GM12878 (cell line): ENCODE measurements at regions of chr4 and their contacts with region 1.

Region 1: DNA sequence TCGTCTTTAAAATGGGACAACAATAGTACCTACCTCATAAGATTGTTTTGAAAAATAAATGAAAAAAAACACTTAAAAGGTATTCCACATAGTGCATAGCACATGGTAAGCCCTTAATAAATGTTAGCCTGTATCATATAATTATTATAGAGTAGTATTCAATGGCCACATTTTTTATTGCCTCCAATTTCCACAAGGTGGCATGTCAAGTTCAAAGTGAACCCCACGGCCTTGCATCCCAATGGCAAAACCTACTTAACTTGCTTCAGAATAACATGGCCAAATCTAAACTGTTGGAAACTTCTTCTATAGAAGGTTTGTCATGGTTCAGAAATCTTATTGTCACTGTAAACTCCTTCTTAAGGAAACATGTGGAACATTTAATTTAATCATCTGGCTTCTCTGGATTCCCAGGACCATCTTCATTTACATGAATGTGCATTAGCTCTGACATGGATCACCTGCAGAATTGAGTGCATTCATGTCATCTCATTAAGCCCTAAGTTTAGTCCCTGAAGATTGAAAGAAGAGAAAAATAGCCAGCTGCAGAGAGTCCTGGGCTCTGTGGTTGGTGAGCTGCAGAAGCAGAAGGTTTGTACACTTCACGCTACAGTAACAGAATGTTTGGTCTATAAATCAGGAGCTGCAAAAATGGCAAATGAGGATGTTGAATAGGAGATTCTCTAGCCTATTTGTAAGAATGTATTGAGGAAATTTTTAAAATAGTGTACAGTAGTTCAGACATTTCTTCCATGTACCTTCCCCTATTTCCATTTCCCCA is 61.0 kb downstream of the ANXA3 start:
- DNase-seq: no peak
- ATAC-seq: peak; percentile 64
- H3K4me3 ChIP-seq: no peak overlapping the region
- H3K27ac ChIP-seq: no peak overlapping the region
- H3K4me1 ChIP-seq: peaks cover 35% of the 10 kb centered on the region
- H3K27me3 ChIP-seq: no peaks in the 10 kb centered on the region
- CTCF ChIP-seq: peak; percentile 55 to 80 (median 62)
- EP300 ChIP-seq: no peak
- POLR2A ChIP-seq: no peak
- RAD21 ChIP-seq: peak; percentile 89

Region 2: GRCh38 chr4:77959566-77960338 is 652.8 kb before region 1 on chr4:
- CTCF ChIA-PET with region 1: interaction called, 7 read pairs
- POLR2A ChIA-PET with region 1: no interaction called
- RAD21 ChIA-PET with region 1: interaction called, 10 read pairs
- SMC1A ChIA-PET with region 1: interaction called, 5 read pairs
- in situ Hi-C with region 1: no loop called
- intact Hi-C with region 1: no loop called
- DNase-seq: peak; percentile 12
- ATAC-seq: peak; percentile 52
- H3K4me3 ChIP-seq: no peak overlapping the region
- H3K27ac ChIP-seq: no peak overlapping the region
- H3K4me1 ChIP-seq: no peaks in the 10 kb centered on the region
- H3K27me3 ChIP-seq: no peaks in the 10 kb centered on the region
- CTCF ChIP-seq: peak; percentile 53 to 54 (median 53)
- EP300 ChIP-seq: no peak
- POLR2A ChIP-seq: no peak
- RAD21 ChIP-seq: peak; percentile 74

Region 3: DNA sequence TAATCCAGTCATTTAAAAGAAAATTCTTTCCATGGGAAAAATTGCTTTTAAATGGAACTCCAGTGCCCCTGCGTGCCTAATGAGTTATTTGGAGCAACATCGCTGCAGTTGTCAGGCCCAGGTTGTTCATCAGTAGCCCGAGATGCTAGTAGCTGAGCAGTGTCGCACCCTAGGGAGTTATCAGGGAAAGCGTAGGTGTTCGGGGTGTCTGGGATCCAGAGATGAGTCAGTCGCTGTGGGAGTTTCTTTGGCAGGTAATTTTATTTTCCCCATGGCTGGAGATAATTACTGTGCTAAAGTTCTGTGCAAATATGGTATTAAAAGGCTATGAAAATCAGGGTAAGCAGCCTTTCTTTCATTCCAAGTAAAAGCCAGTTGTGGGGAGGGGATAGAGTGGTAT is 11.6 kb before region 1 on chr4:
- CTCF ChIA-PET with region 1: interaction called, 18 read pairs
- POLR2A ChIA-PET with region 1: interaction called, 8 read pairs
- RAD21 ChIA-PET with region 1: interaction called, 35 read pairs
- SMC1A ChIA-PET with region 1: interaction called, 197 read pairs
- in situ Hi-C with region 1: no loop called
- intact Hi-C with region 1: no loop called
- DNase-seq: peak; percentile 63
- ATAC-seq: peak; percentile 92
- H3K4me3 ChIP-seq: no peak overlapping the region
- H3K27ac ChIP-seq: no peak overlapping the region
- H3K4me1 ChIP-seq: no peaks in the 10 kb centered on the region
- H3K27me3 ChIP-seq: no peaks in the 10 kb centered on the region
- CTCF ChIP-seq: peak in 1 of 3 experiments; percentile 16; a peak in 1 of 6 replicates
- EP300 ChIP-seq: peak; percentile 44 to 83; a peak in 3 of 4 replicates
- POLR2A ChIP-seq: no peak
- RAD21 ChIP-seq: no peak

Region 4: GRCh38 chr4:78656968-78657445 is 44.4 kb after region 1 on chr4:
- CTCF ChIA-PET with region 1: interaction called, 7 read pairs
- POLR2A ChIA-PET with region 1: interaction called, 6 read pairs
- RAD21 ChIA-PET with region 1: interaction called, 11 read pairs
- SMC1A ChIA-PET with region 1: interaction called, 79 read pairs
- in situ Hi-C with region 1: no loop called
- intact Hi-C with region 1: loop called (anchors 1 kb)
- DNase-seq: no peak
- ATAC-seq: peak; percentile 25
- H3K4me3 ChIP-seq: peak overlapping the region; percentile 39
- H3K27ac ChIP-seq: peak overlapping the region; percentile 28; the same call in 1 of the 2 replicates
- H3K4me1 ChIP-seq: peaks cover 34% of the 10 kb centered on the region
- H3K27me3 ChIP-seq: no peaks in the 10 kb centered on the region
- CTCF ChIP-seq: no peak
- EP300 ChIP-seq: peak; percentile 47 to 76; a peak in 2 of 4 replicates
- POLR2A ChIP-seq: no peak
- RAD21 ChIP-seq: 0 out of 2 replicates have a peak, but pooled peaks have one; percentile 7

Region 5: GRCh38 chr4:78704981-78705683 is 92.5 kb after region 1 on chr4:
- CTCF ChIA-PET with region 1: interaction called, 6 read pairs
- POLR2A ChIA-PET with region 1: interaction called, 6 read pairs
- RAD21 ChIA-PET with region 1: interaction called, 9 read pairs
- SMC1A ChIA-PET with region 1: interaction called, 13 read pairs
- in situ Hi-C with region 1: no loop called
- intact Hi-C with region 1: no loop called
- DNase-seq: no peak
- ATAC-seq: peak; percentile 40
- H3K4me3 ChIP-seq: no peak overlapping the region
- H3K27ac ChIP-seq: no peak overlapping the region
- H3K4me1 ChIP-seq: peaks cover 24% of the 10 kb centered on the region
- H3K27me3 ChIP-seq: no peaks in the 10 kb centered on the region
- CTCF ChIP-seq: no peak
- EP300 ChIP-seq: no peak
- POLR2A ChIP-seq: no peak
- RAD21 ChIP-seq: no peak

Region 6: GRCh38 chr4:78775303-78776030 is 162.9 kb after region 1 on chr4:
- CTCF ChIA-PET with region 1: interaction called, 5 read pairs
- POLR2A ChIA-PET with region 1: interaction called, 5 read pairs
- RAD21 ChIA-PET with region 1: interaction called, 49 read pairs
- SMC1A ChIA-PET with region 1: interaction called, 80 read pairs
- in situ Hi-C with region 1: no loop called
- intact Hi-C with region 1: loop called (anchors 2 kb)
- DNase-seq: no peak
- ATAC-seq: peak; percentile 65
- H3K4me3 ChIP-seq: peak overlapping the region; percentile 99
- H3K27ac ChIP-seq: peak overlapping the region; percentile 80
- H3K4me1 ChIP-seq: peaks cover 20% of the 10 kb centered on the region
- H3K27me3 ChIP-seq: no peaks in the 10 kb centered on the region
- CTCF ChIP-seq: no peak
- EP300 ChIP-seq: peak in 1 of 2 experiments; percentile 58; a peak in 1 of 4 replicates
- POLR2A ChIP-seq: no peak
- RAD21 ChIP-seq: no peak

Region 7: DNA sequence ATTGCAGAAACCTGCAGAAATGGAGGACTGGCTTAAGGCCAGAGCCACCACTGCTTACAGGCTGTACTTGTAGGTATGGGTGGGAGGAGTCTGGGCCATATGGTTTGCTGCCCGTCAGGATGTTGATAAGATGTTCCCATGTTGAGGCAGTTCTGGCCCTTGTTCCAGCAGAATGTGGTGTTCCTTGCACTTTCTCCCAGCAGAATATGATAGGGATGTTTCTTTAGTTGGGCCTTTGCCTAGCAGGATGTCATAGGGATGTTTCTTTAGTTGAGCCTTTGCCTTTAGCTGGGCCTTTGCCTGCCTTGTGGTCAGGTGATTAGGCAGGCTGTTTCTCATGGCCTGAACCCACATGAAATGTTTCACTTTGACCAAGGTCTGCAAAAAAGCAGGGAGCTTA is 465.8 kb after region 1 on chr4:
- CTCF ChIA-PET with region 1: no interaction called
- POLR2A ChIA-PET with region 1: no interaction called
- RAD21 ChIA-PET with region 1: no interaction called
- SMC1A ChIA-PET with region 1: no interaction called
- in situ Hi-C with region 1: no loop called
- intact Hi-C with region 1: no loop called
- DNase-seq: no peak
- ATAC-seq: peak; percentile 73
- H3K4me3 ChIP-seq: no peak overlapping the region
- H3K27ac ChIP-seq: no peak overlapping the region
- H3K4me1 ChIP-seq: no peaks in the 10 kb centered on the region
- H3K27me3 ChIP-seq: no peaks in the 10 kb centered on the region
- CTCF ChIP-seq: no peak
- EP300 ChIP-seq: no peak
- POLR2A ChIP-seq: no peak
- RAD21 ChIP-seq: no peak

Region 8: GRCh38 chr4:79134767-79135166 is 522.2 kb after region 1 on chr4:
- CTCF ChIA-PET with region 1: no interaction called
- POLR2A ChIA-PET with region 1: no interaction called
- RAD21 ChIA-PET with region 1: no interaction called
- SMC1A ChIA-PET with region 1: no interaction called
- in situ Hi-C with region 1: no loop called
- intact Hi-C with region 1: no loop called
- DNase-seq: no peak
- ATAC-seq: no peak
- H3K4me3 ChIP-seq: no peak overlapping the region
- H3K27ac ChIP-seq: no peak overlapping the region
- H3K4me1 ChIP-seq: no peaks in the 10 kb centered on the region
- H3K27me3 ChIP-seq: no peaks in the 10 kb centered on the region
- CTCF ChIP-seq: no peak
- EP300 ChIP-seq: no peak
- POLR2A ChIP-seq: no peak
- RAD21 ChIP-seq: no peak

Region 9: DNA sequence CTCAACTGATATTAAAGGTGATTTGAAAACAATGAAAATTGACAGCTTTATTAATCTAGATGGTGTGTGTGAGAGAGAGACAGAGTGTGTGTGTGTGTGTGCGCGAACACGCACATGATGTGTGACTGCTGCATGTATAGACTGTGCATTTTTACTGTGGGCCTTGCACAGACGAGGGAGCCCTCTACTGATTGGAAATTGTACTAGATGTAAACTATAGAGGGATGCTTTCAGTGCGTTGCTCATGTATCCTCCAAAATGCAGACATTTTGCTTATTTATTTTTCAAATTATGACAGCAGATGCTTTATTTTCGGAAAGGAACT is 963.8 kb after region 1 on chr4:
- CTCF ChIA-PET with region 1: no interaction called
- POLR2A ChIA-PET with region 1: no interaction called
- RAD21 ChIA-PET with region 1: no interaction called
- SMC1A ChIA-PET with region 1: no interaction called
- in situ Hi-C with region 1: no loop called
- intact Hi-C with region 1: no loop called
- DNase-seq: no peak
- ATAC-seq: peak; percentile 88
- H3K4me3 ChIP-seq: no peak overlapping the region
- H3K27ac ChIP-seq: no peak overlapping the region
- H3K4me1 ChIP-seq: no peaks in the 10 kb centered on the region
- H3K27me3 ChIP-seq: no peaks in the 10 kb centered on the region
- CTCF ChIP-seq: peak; percentile 37 to 50 (median 49); a peak in 4 of 6 replicates
- EP300 ChIP-seq: no peak
- POLR2A ChIP-seq: no peak
- RAD21 ChIP-seq: peak; percentile 70